Gastrocnemius medialis (tissue), 4 donors: ENCODE measurements at regions of chr15 and their contacts with region 1.

Region 1: DNA sequence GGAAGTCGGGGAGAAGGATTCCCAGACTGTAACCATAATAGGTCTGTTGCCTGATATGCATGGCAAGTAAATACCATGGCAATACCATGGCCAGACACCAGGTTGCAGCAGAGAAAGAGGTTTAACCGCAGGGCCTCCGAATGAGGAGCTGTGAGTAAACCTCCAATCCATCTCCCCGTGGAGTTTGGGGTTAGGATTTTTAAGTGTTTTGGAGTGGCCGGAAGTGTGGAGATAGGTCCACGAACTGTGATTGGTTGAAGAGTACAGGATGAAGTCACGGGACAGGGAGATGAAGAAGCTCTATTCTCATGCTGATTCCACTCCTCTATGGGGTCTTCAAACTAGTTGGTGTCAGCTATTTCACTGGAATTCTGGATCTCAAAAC is 127.9 kb downstream of the ST8SIA2 start:
- DNase-seq: peak; percentile 67 to 79
- ATAC-seq: peak; percentile 95 to 97
- H3K4me3 ChIP-seq: no peak overlapping the region
- H3K27ac ChIP-seq: no peak overlapping the region
- H3K4me1 ChIP-seq: peaks cover 12 to 20% of the 10 kb centered on the region in 2 donors
- H3K27me3 ChIP-seq: no peaks in the 10 kb centered on the region
- CTCF ChIP-seq: peak; percentile 66 to 84 (median 79)
- POLR2A ChIP-seq: no peak

Region 2: DNA sequence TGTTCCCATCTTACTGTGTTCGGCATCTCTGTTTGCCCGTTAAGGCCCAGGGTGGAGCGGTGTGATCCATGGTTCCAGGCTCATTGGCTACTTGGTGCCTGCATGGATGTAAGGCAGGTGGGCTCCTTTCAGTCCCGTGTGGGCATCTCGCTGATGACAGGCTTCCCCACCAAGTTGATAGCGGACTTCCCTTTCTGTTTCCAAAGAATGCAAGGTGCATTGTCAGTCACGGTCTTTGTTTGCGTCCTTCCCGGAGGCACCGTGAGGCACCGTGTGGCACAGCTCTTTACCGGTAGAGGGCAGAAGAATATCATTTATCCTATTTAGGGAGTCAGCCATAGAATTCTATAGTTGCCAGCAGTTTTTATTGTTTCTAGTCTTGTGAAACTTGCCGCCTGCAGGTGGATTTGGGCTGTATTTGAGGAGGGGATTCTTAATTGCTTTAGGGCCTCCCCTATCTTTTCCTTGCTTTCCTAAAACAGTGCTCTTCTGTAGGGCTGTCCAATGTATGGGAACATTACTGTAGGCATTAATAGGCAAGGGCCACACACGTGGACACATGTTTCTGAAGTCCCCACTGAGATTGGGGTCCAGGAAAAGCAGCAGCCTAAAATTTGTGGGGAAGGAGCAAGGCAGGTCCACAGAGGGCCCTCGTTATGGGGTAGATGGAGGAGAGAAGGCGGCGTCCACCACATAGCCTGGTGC is 424.0 kb before region 1 on chr15:
- in situ Hi-C with region 1: no loop called
- intact Hi-C with region 1: loop called (anchors 5 kb)
- DNase-seq: no peak
- ATAC-seq: peak; percentile 68 to 84
- H3K4me3 ChIP-seq: no peak overlapping the region
- H3K27ac ChIP-seq: no peak overlapping the region
- H3K4me1 ChIP-seq: no peaks in the 10 kb centered on the region
- H3K27me3 ChIP-seq: no peaks in the 10 kb centered on the region
- CTCF ChIP-seq: peak; percentile 24 to 65 (median 58)
- POLR2A ChIP-seq: no peak

Region 3: DNA sequence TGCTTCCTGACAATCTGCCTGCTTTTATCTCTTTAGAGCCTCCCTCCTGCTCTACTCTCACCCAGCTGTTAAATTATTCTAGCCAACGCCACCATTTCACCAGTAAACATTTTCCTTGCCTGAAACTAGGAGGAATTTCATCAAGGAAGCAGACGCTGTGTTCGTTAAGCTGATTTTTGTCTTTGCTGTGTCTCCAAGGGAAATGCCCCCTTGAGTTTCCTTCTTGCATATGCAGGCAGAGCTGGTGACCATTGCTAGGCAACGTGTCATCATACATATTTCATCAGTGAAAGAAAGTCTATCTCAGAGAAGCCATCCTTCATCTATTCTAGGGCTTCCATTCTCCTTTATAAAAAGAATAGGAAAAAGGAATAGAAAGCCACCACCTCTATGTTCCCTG is 215.0 kb before region 1 on chr15:
- in situ Hi-C with region 1: no loop called
- intact Hi-C with region 1: no loop called
- DNase-seq: no peak
- ATAC-seq: no peak
- H3K4me3 ChIP-seq: no peak overlapping the region
- H3K27ac ChIP-seq: no peak overlapping the region
- H3K4me1 ChIP-seq: no peaks in the 10 kb centered on the region
- H3K27me3 ChIP-seq: peaks cover 0 to 3% (median 0%) of the 10 kb centered on the region in 3 donors
- CTCF ChIP-seq: no peak
- POLR2A ChIP-seq: no peak

Region 4: DNA sequence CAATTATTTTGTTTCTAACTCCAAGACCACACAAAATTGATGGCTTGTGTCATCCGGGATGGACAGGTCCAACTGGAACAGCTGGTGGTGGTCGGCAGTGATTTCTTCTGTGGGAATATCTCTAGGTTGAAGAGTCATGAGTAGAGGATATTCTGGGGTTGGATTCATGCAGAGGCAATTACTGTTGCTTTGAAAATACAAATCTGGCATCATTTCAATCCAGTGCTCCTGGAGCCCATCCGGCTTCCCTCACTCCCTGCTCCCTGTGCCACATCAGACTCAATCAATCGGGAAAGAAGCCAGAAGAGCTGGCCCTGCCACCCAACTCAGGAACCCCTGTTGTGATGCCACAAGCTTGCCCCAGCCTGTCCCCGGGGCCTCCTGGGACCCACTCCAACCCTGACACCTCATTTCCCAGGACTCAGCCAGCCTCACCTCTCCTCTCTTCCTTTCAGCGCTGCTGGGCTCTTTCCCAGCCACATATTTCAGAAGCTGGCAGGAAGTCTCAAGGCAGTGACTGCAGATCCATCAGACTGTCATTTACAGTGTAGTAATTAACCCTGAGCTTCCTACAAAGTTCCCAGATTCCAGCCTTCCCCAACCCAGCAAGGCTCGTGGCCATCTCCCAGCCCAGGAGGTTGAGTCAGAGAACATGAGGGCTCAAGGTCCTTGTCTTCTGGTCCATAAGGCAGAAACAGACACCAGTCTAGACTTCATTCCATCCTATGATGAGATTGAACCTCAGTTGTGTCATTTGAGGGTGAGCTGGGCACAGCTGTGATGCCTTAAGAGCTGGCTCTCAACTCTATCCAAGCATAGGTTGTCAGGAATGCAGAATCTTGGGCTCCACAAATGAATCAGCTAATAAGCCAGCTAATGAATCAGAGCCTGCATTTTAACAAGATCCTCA is 19.9 kb after region 1 on chr15:
- in situ Hi-C with region 1: no loop called
- intact Hi-C with region 1: no loop called
- DNase-seq: no peak
- ATAC-seq: no peak
- H3K4me3 ChIP-seq: no peak overlapping the region
- H3K27ac ChIP-seq: no peak overlapping the region
- H3K4me1 ChIP-seq: no peaks in the 10 kb centered on the region
- H3K27me3 ChIP-seq: no peaks in the 10 kb centered on the region
- CTCF ChIP-seq: no peak
- POLR2A ChIP-seq: no peak

Region 5: GRCh38 chr15:92617549-92618520 is 96.2 kb after region 1 on chr15:
- in situ Hi-C with region 1: loop called in 1 of 4 experiments (anchors 10 kb)
- intact Hi-C with region 1: loop called (anchors 5 kb)
- DNase-seq: peak; percentile 76 to 84
- ATAC-seq: peak; percentile 73 to 75
- H3K4me3 ChIP-seq: peak overlapping the region in 2 of 4 donors; percentile 5 to 10
- H3K27ac ChIP-seq: peak overlapping the region; percentile 68 to 92 (median 80)
- H3K4me1 ChIP-seq: peaks cover 37 to 47% of the 10 kb centered on the region in 2 donors
- H3K27me3 ChIP-seq: no peaks in the 10 kb centered on the region
- CTCF ChIP-seq: no peak
- POLR2A ChIP-seq: peak in 1 of 2 donors; percentile 30

Region 6: DNA sequence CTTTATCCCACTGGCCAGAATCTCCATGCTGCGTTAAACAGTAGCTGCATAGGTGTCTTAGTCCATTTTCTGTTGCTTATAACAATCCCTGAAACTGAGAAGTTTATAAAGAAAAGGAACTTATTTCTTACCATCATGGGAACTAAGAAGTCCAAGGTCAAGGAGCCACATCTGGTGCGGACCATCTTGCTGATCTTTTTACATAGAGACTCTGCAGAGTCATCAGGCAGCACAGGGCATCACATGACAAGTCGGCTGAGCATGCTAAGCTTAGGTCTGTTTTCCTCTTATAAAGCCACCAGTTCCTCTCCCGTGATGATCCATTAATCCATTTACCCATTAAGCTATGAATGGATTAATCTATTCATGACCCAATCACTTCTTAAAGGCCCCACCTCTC is 156.4 kb after region 1 on chr15:
- in situ Hi-C with region 1: loop called in 3 of 4 experiments (anchors 5 to 10 kb)
- intact Hi-C with region 1: loop called (anchors 1 kb)
- DNase-seq: no peak
- ATAC-seq: no peak
- H3K4me3 ChIP-seq: no peak overlapping the region
- H3K27ac ChIP-seq: no peak overlapping the region
- H3K4me1 ChIP-seq: no peaks in the 10 kb centered on the region
- H3K27me3 ChIP-seq: no peaks in the 10 kb centered on the region
- CTCF ChIP-seq: no peak
- POLR2A ChIP-seq: no peak

Region 7: DNA sequence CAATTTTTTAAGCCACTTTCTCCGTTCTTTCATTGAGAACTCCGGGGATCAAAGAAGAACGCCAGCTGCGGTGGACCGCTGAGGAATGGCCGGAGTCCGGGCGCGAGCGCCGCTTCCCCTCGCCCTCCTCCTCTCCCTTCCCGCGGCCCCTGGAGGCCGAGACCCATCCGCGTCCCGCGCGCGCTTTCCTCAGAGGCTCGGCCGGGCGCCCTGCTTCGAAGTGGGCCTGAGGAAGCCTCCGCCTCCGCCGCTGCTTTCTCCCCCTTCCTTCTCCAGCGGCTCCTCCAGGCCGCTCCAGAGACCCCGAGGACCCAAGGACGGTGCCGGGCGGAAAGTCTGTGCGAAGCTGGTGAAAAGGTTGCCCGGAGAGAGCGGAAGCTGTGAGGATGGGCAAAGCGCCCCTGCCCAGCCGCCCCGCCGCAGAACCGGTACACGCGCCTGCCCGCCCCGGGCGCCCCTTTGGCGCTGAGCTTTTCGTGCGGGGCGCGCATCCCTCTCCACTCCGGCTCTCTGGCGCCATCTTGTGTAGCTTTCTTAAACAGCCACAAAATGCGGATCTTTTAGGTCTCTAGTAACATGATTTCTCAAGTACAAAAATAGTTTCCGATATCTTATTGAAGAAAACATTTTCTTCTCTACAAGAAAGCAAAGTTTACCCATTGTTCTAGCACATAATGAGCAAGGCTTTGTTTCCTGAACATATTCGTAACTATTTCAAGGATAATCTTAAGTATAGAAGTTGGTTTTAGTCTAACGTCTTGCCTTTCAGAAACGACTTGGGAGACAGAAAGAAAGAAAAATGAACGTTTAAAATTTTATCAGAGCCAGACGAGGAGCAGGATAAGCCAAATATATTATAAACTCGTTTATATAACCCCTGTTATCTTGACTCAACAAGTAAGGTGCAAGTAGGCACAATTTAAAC is 193.1 kb after region 1 on chr15:
- in situ Hi-C with region 1: loop called (anchors 5 to 10 kb)
- intact Hi-C with region 1: loop called (anchors 1 kb)
- DNase-seq: peak; percentile 31 to 49
- ATAC-seq: peak; percentile 89 to 91
- H3K4me3 ChIP-seq: peak overlapping the region; percentile 63 to 89 (median 70)
- H3K27ac ChIP-seq: peak overlapping the region; percentile 39 to 64 (median 54)
- H3K4me1 ChIP-seq: peaks cover 7% of the 10 kb centered on the region in 2 donors
- H3K27me3 ChIP-seq: no peaks in the 10 kb centered on the region
- CTCF ChIP-seq: peak; percentile 76 to 95 (median 85)
- POLR2A ChIP-seq: no peak